ENCODE measurements at regions of chr4 and their contacts with region 1.

Region 1: GRCh38 chr4:163554870-163555465 is 60.5 kb downstream of the TMA16 start:
- DNase-seq: peak in 2 of 3 donors; percentile 21 to 48
- H3K4me3 ChIP-seq: no peak overlapping the region
- H3K4me3 Mint-ChIP-seq: no peak overlapping the region
- H3K27ac ChIP-seq: peak overlapping the region in 1 of 2 donors; percentile 37
- H3K27ac Mint-ChIP-seq: peak overlapping the region in 2 of 7 donors; percentile 46 to 81
- H3K4me1 ChIP-seq: peaks cover 38 to 70% of the 10 kb centered on the region in 2 donors
- H3K4me1 Mint-ChIP-seq: peaks cover 67% of the 10 kb centered on the region
- H3K27me3 ChIP-seq: no peaks in the 10 kb centered on the region
- H3K27me3 Mint-ChIP-seq: peaks cover 0 to 4% (median 0%) of the 10 kb centered on the region in 3 donors
- CTCF ChIP-seq: peak; percentile 86

Region 2: GRCh38 chr4:163166041-163166579 is 388.9 kb before region 1 on chr4:
- intact Hi-C with region 1: loop called in 1 of 2 experiments (anchors 10 kb)
- DNase-seq: peak; percentile 20 to 56 (median 23)
- H3K4me3 ChIP-seq: peak overlapping the region; percentile 53 to 96 (median 90)
- H3K4me3 Mint-ChIP-seq: peak overlapping the region; percentile 91 to 95
- H3K27ac ChIP-seq: peak overlapping the region; percentile 87 to 89
- H3K27ac Mint-ChIP-seq: peak overlapping the region; percentile 91 to 98 (median 96)
- H3K4me1 ChIP-seq: peaks cover 17 to 32% of the 10 kb centered on the region in 2 donors
- H3K4me1 Mint-ChIP-seq: peaks cover 25% of the 10 kb centered on the region
- H3K27me3 ChIP-seq: no peaks in the 10 kb centered on the region
- H3K27me3 Mint-ChIP-seq: peaks cover 2 to 6% (median 2%) of the 10 kb centered on the region in 3 donors
- CTCF ChIP-seq: no peak

Region 3: DNA sequence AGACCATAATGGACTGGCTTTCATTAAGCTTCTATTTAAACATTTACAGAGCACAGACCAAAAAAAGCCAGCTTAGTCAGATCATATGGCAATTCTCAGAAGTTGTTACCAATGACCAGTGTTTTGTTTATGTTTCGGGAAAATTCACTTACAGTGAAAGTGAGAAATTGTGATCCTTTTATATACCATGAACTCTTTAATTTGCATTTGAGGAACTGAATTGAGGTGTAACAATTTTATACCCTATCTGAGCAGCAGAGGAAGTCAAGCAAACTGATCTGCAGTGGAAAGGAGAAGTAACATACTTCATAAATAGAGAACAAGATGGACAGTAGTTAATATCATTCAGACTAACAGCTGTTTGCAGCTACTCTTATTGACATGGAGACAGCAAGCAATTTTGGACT is 36.6 kb after region 1 on chr4:
- intact Hi-C with region 1: loop called in 1 of 2 experiments (anchors 5 kb)
- DNase-seq: peak; percentile 68 to 84 (median 75)
- H3K4me3 ChIP-seq: peak overlapping the region in 2 of 3 experiments; percentile 22 to 58
- H3K4me3 Mint-ChIP-seq: peak overlapping the region; percentile 6 to 69
- H3K27ac ChIP-seq: peak overlapping the region in 1 of 2 donors; percentile 77
- H3K27ac Mint-ChIP-seq: peak overlapping the region; percentile 85 to 97 (median 91)
- H3K4me1 ChIP-seq: peaks cover 80 to 97% of the 10 kb centered on the region in 2 donors
- H3K4me1 Mint-ChIP-seq: peaks cover 71% of the 10 kb centered on the region
- H3K27me3 ChIP-seq: no peaks in the 10 kb centered on the region
- H3K27me3 Mint-ChIP-seq: peaks cover 0 to 1% (median 0%) of the 10 kb centered on the region in 3 donors
- CTCF ChIP-seq: peak; percentile 11

Region 4: DNA sequence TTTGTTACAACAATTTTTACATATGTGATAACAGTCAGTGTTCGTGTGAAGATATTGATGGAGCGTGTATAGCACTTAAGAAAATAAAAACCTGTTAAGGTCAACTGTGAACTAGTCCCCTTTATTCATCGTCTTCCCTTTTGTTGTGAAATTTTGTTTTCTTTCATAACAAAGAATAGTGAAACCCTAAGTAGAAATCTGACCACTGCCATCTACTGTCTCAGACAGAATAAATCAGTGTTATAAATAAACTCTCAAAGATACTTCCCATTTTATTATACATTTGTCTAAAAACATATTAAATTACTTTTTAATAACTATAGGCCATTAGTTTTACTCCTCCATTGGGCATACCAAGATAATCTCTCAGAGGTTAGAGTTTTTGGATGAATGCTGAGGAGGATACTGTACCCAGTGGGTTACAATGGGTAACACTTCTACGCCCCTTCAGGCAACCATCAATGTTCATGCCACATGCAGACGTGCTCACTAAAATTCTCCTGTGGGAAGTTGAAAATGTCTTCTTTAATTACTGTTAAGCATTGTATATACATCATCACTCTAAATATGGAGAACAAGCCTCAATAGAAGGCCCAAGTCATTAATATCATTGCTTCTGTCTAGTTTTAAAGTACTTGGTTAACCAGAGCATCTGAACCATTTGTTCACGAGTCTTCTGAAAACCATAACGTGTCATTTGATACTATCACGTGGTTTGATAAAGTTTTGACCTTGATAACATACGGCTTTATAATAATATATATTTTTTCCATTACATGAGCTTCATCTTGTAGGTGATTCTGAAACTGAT is 110.8 kb after region 1 on chr4:
- intact Hi-C with region 1: loop called (anchors 5 kb)
- DNase-seq: peak; percentile 37 to 83 (median 68)
- H3K4me3 ChIP-seq: peak overlapping the region; percentile 11 to 64 (median 22)
- H3K4me3 Mint-ChIP-seq: peak overlapping the region in 1 of 2 donors; percentile 72
- H3K27ac ChIP-seq: peak overlapping the region; percentile 32 to 78
- H3K27ac Mint-ChIP-seq: peak overlapping the region; percentile 88 to 94 (median 93)
- H3K4me1 ChIP-seq: peaks cover 54 to 61% of the 10 kb centered on the region in 2 donors
- H3K4me1 Mint-ChIP-seq: peaks cover 59% of the 10 kb centered on the region
- H3K27me3 ChIP-seq: no peaks in the 10 kb centered on the region
- H3K27me3 Mint-ChIP-seq: no peaks in the 10 kb centered on the region
- CTCF ChIP-seq: peak; percentile 64

Region 5: GRCh38 chr4:163681208-163681821 is 126.3 kb after region 1 on chr4:
- intact Hi-C with region 1: loop called (anchors 2 to 5 kb)
- DNase-seq: peak; percentile 57 to 87 (median 77)
- H3K4me3 ChIP-seq: no peak overlapping the region
- H3K4me3 Mint-ChIP-seq: no peak overlapping the region
- H3K27ac ChIP-seq: no peak overlapping the region
- H3K27ac Mint-ChIP-seq: peak overlapping the region in 1 of 7 donors; percentile 77
- H3K4me1 ChIP-seq: peaks cover 5 to 14% of the 10 kb centered on the region in 2 donors
- H3K4me1 Mint-ChIP-seq: peaks cover 17% of the 10 kb centered on the region
- H3K27me3 ChIP-seq: no peaks in the 10 kb centered on the region
- H3K27me3 Mint-ChIP-seq: peaks cover 0 to 6% (median 2%) of the 10 kb centered on the region in 3 donors
- CTCF ChIP-seq: peak; percentile 94

Region 6: GRCh38 chr4:163755013-163755412 is 200.0 kb after region 1 on chr4:
- intact Hi-C with region 1: loop called in 1 of 2 experiments (anchors 5 kb)
- DNase-seq: peak; percentile 3 to 14 (median 8)
- H3K4me3 ChIP-seq: no peak overlapping the region
- H3K4me3 Mint-ChIP-seq: peak overlapping the region in 1 of 2 donors; percentile 56
- H3K27ac ChIP-seq: no peak overlapping the region
- H3K27ac Mint-ChIP-seq: no peak overlapping the region
- H3K4me1 ChIP-seq: no peaks in the 10 kb centered on the region
- H3K4me1 Mint-ChIP-seq: peaks cover 5% of the 10 kb centered on the region
- H3K27me3 ChIP-seq: no peaks in the 10 kb centered on the region
- H3K27me3 Mint-ChIP-seq: peaks cover 0 to 5% (median 1%) of the 10 kb centered on the region in 3 donors
- CTCF ChIP-seq: peak; percentile 45

Measured in CD14-positive monocyte (primary cell).